CD8-positive, alpha-beta T cell (primary cell): ENCODE measurements at regions of chr6 and their contacts with region 1.

Region 1: DNA sequence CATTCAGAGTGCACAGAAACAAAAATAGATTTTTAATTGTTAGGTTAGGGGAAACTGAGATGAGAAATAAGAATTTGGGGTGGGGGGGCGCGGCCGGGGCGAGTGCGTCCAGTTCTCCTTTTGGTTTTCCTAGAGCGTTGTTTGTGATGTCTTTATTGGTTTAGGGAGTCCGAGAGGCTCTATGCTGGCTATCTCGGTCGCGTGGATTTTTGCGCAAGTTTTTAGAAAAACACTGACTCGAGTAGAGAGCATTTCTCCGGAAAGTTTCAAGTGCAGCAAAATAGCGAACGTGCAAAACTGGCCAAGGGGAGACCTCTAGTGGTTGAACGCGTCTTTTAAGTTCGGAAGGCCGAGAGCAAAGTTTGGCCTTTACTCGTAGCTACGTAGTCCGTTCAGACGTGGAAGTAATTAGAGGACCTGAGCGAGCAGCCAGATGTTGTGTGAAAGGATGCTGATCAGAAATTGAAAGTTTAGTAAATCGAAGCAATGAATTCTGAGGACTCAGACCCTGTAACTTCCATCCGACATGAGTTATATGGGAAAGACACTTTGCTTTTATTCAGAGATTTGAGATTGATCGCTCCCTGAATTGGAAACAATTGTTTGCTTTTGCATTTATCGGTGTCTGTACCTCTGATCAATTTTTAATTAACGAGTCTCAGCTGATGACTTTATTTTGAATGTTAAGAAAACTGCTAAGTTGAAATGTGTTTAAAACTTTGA is 2.7 kb downstream of the L3MBTL3 start:
- DNase-seq: peak; percentile 57 to 93 (median 78)
- ATAC-seq: peak; percentile 45
- H3K4me3 ChIP-seq: peak overlapping the region; percentile 61 to 85
- H3K4me3 Mint-ChIP-seq: peak overlapping the region; percentile 98
- H3K27ac ChIP-seq: peak overlapping the region; percentile 60 to 82
- H3K27ac Mint-ChIP-seq: peak overlapping the region; percentile 96
- H3K4me1 ChIP-seq: peaks cover 11% of the 10 kb centered on the region
- H3K4me1 Mint-ChIP-seq: peaks cover 43% of the 10 kb centered on the region
- H3K27me3 ChIP-seq: no peaks in the 10 kb centered on the region
- H3K27me3 Mint-ChIP-seq: no peaks in the 10 kb centered on the region
- CTCF ChIP-seq: peak; percentile 63

Region 2: DNA sequence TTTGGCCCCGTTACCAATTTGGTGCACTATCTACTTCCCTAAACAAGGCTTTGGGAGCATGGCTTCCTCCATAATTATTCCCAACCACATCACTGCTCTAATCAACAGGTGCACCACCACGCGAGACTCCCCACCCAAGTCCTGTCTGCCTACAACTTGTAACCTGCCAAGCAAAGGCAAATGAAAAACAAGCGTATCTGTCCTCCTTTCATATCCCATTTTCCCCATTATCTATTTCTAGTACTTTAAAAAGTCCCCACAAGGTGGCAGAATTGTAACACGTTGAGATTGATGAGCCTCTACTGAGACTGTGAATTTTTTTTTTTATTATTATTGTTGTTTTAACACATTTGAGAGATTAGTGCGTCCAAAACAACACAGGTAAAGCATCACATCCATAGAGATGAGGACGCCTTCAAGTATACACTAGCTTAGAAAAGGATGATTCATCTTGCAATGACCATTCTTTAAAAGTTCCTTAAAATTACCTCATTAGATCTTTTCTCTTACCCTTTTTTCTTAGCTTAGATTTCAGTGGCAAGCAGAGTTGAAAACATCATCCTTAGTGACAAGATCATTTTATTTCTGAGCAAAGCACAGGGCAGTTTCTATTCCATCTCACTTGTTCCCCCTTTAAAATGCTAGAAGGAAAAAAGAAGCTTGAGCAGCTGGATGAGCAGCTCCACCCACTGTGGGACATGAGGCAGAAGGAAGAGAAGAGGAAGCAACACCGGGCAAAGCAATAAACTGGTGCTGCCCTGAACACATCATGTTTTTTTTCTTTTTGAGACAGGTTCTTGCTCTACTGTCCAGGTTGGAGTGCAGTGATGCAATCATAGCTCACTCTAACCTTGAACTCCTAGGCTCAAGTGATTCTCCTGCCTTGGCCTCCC is 521.9 kb before region 1 on chr6:
- CTCF ChIA-PET with region 1: interaction called, 4 read pairs
- POLR2A ChIA-PET with region 1: interaction called, 3 read pairs
- intact Hi-C with region 1: loop called (anchors 2 kb)
- DNase-seq: peak in 3 of 9 experiments; percentile 22 to 76 (median 67)
- ATAC-seq: peak; percentile 68
- H3K4me3 ChIP-seq: no peak overlapping the region
- H3K4me3 Mint-ChIP-seq: peak overlapping the region; percentile 53
- H3K27ac ChIP-seq: no peak overlapping the region
- H3K27ac Mint-ChIP-seq: no peak overlapping the region
- H3K4me1 ChIP-seq: peaks cover 4% of the 10 kb centered on the region
- H3K4me1 Mint-ChIP-seq: peaks cover 9% of the 10 kb centered on the region
- H3K27me3 ChIP-seq: no peaks in the 10 kb centered on the region
- H3K27me3 Mint-ChIP-seq: no peaks in the 10 kb centered on the region
- CTCF ChIP-seq: peak; percentile 69

Region 3: DNA sequence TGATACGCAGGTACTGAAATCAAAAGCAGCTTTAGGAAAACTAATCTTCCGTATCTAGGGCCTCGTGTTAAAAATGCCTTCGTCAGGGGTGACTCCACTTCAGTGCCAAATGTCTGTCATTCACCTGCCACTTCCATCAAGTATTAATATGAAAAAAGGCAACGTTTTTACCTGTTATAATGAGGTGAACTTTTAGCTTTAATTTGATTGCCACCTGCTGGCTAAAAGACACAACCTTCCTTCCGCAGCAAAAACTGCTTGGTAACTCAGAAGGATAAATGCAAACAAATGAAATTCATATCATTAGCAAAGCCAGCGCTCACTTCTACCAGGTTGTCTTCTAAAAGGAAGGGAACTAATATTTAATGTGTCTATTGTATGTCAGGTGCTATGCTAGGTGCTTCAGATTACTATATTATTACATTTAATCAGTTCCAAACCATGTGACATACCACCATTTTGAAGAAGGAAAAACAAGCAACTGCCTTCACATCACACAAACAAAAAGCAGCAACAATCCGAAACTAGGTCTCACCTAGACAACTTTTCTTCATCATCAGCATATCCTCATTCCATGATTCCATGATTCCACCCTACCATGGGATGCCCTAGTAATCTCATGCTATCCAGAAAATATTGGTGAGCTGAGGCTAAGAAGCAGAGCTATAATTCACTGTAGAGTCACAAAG is 290.4 kb before region 1 on chr6:
- CTCF ChIA-PET with region 1: interaction called, 11 read pairs
- POLR2A ChIA-PET with region 1: interaction called, 5 read pairs
- intact Hi-C with region 1: loop called (anchors 1 to 5 kb)
- DNase-seq: peak in 4 of 9 experiments; percentile 16 to 70 (median 46)
- ATAC-seq: peak; percentile 67
- H3K4me3 ChIP-seq: no peak overlapping the region
- H3K4me3 Mint-ChIP-seq: no peak overlapping the region
- H3K27ac ChIP-seq: no peak overlapping the region
- H3K27ac Mint-ChIP-seq: no peak overlapping the region
- H3K4me1 ChIP-seq: no peaks in the 10 kb centered on the region
- H3K4me1 Mint-ChIP-seq: peaks cover 11% of the 10 kb centered on the region
- H3K27me3 ChIP-seq: no peaks in the 10 kb centered on the region
- H3K27me3 Mint-ChIP-seq: no peaks in the 10 kb centered on the region
- CTCF ChIP-seq: peak; percentile 67

Region 4: DNA sequence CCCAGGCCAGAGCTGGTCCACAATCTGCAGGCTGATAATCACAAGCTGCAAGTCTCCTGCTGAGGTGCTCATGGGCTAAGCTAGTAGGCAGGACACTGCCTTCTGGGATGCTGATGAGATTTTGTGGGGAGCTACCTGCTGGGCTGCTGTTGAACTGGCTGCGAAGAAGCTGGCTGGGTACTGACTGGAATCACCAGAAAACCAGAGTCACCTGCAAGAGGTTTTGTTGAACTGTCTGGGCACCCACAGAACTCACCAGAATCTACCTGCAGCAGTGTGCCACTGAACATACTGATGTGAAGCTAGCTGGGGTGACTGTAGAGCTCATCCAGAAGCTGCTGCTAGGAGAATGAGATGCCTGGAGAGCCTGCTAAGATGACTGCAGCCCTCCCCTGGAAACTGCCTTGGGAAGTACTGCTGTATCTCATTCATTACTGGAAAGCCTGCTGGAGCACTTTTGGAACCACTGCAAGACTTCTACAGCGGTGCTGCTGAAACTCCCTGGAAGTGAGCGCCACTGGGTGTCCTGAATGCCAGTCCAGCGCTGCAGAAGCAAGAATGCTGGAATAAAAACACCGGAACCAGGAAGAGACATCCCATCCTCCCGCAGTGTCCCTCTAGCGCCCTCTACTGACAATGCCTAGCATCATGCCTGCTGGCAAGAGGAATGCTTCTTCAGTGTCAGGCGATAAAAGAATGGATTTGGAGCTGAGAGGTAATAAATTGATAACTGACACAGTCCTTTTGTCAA is 246.2 kb before region 1 on chr6:
- CTCF ChIA-PET with region 1: interaction called, 5 read pairs
- POLR2A ChIA-PET with region 1: no interaction called
- intact Hi-C with region 1: loop called in 1 of 2 experiments (anchors 5 kb)
- DNase-seq: peak in 7 of 9 experiments; percentile 26 to 66 (median 47)
- ATAC-seq: no peak
- H3K4me3 ChIP-seq: no peak overlapping the region
- H3K4me3 Mint-ChIP-seq: no peak overlapping the region
- H3K27ac ChIP-seq: no peak overlapping the region
- H3K27ac Mint-ChIP-seq: no peak overlapping the region
- H3K4me1 ChIP-seq: no peaks in the 10 kb centered on the region
- H3K4me1 Mint-ChIP-seq: no peaks in the 10 kb centered on the region
- H3K27me3 ChIP-seq: no peaks in the 10 kb centered on the region
- H3K27me3 Mint-ChIP-seq: peaks cover 8% of the 10 kb centered on the region
- CTCF ChIP-seq: peak; percentile 64

Region 5: DNA sequence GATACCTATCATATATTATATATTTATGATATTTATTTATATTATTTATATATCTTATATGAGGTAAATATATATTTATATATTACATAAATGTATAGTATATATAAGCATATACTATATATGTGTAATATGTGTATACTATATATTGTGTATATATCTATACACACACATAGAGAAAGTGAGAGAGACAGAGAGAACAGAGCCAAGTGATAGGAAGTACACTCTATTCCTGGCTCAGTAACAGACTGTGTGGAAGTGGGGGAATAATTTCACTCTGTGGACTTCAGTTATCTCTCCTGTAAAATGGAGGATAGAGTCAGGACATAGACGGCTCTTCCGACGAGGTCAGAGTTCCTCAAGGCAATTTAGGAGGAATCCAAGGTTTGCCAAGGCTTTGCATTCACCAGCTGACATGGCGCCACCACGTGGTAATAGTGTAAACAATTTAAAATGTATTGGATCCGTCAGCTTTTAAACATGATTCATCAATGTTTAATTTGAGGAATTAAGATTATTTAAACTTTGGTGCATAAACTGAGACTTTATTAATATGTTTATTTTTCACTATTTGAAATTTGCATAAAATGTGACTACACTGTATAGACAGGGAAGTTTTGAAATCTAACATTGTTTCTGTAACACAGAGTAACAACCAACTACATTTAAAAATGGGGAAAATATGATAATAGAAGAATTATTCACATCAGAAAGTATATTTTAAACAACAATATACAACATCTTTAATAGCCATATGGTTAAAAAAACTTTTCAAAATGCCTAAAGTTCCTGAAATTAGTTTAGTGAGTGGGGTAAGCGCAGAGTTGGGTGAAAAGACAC is 84.5 kb before region 1 on chr6:
- CTCF ChIA-PET with region 1: interaction called, 7 read pairs
- POLR2A ChIA-PET with region 1: no interaction called
- intact Hi-C with region 1: loop called (anchors 1 to 5 kb)
- DNase-seq: peak in 6 of 9 experiments; percentile 26 to 69 (median 45)
- ATAC-seq: peak; percentile 40
- H3K4me3 ChIP-seq: no peak overlapping the region
- H3K4me3 Mint-ChIP-seq: no peak overlapping the region
- H3K27ac ChIP-seq: no peak overlapping the region
- H3K27ac Mint-ChIP-seq: no peak overlapping the region
- H3K4me1 ChIP-seq: no peaks in the 10 kb centered on the region
- H3K4me1 Mint-ChIP-seq: peaks cover 2% of the 10 kb centered on the region
- H3K27me3 ChIP-seq: no peaks in the 10 kb centered on the region
- H3K27me3 Mint-ChIP-seq: peaks cover 10% of the 10 kb centered on the region
- CTCF ChIP-seq: peak; percentile 76

Region 6: GRCh38 chr6:130105996-130106704 is 85.1 kb after region 1 on chr6:
- CTCF ChIA-PET with region 1: no interaction called
- POLR2A ChIA-PET with region 1: no interaction called
- intact Hi-C with region 1: no loop called
- DNase-seq: no peak
- ATAC-seq: no peak
- H3K4me3 ChIP-seq: no peak overlapping the region
- H3K4me3 Mint-ChIP-seq: no peak overlapping the region
- H3K27ac ChIP-seq: no peak overlapping the region
- H3K27ac Mint-ChIP-seq: no peak overlapping the region
- H3K4me1 ChIP-seq: no peaks in the 10 kb centered on the region
- H3K4me1 Mint-ChIP-seq: peaks cover 9% of the 10 kb centered on the region
- H3K27me3 ChIP-seq: no peaks in the 10 kb centered on the region
- H3K27me3 Mint-ChIP-seq: no peaks in the 10 kb centered on the region
- CTCF ChIP-seq: no peak

Region 7: DNA sequence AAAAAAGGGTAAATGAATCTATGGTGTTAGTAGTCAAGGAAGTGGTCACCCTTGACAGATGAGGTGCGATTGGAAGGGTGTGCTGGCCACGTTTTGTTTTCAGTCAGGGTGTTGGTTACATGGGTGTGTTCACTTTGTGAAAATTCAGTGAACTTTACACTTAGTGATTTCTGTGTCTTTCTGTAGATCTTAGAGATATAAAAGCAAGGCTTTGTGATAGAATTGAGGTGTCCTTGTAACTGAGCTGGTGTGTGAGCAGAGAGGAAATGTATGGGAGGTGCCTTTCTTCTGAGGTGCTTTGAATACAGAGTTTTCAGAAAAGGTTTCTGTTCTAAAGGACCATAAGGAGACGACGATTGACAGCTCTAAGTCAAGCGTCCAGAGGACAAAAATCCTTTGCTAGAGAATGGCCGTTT is 111.2 kb after region 1 on chr6:
- CTCF ChIA-PET with region 1: no interaction called
- POLR2A ChIA-PET with region 1: no interaction called
- intact Hi-C with region 1: loop called in 1 of 2 experiments (anchors 5 kb)
- DNase-seq: peak; percentile 30 to 89 (median 70)
- ATAC-seq: peak; percentile 85
- H3K4me3 ChIP-seq: peak overlapping the region; percentile 9 to 20
- H3K4me3 Mint-ChIP-seq: peak overlapping the region; percentile 68
- H3K27ac ChIP-seq: peak overlapping the region; percentile 71 to 73
- H3K27ac Mint-ChIP-seq: peak overlapping the region; percentile 93
- H3K4me1 ChIP-seq: peaks cover 61% of the 10 kb centered on the region
- H3K4me1 Mint-ChIP-seq: peaks cover 79% of the 10 kb centered on the region
- H3K27me3 ChIP-seq: no peaks in the 10 kb centered on the region
- H3K27me3 Mint-ChIP-seq: no peaks in the 10 kb centered on the region
- CTCF ChIP-seq: no peak

Region 8: DNA sequence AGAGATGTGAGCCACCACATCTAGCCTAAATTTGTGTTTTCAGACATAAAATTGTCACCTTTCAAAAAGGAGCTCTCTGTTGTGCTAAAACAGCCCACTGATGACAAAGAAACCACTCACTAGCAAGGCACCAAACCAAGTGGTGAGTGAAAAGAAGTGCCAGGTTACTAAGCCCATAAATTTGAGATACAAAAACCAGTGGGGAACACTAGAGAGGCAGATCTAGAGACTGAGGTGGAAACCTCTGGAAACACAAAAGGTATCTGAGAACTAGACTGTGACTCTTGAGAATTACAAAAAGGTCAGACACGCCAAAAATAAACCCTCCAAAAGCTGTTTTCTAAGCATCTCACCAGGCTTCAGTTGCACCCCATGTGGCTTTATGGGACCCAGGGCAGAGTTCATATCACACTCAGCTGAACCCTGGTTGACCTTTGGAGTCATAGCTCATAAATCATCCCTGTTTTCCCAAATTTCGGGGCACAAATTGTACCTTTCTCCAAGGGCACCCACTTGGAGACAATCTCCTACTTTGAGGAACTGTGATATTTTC is 177.5 kb after region 1 on chr6:
- CTCF ChIA-PET with region 1: no interaction called
- POLR2A ChIA-PET with region 1: no interaction called
- intact Hi-C with region 1: no loop called
- DNase-seq: no peak
- ATAC-seq: no peak
- H3K4me3 ChIP-seq: no peak overlapping the region
- H3K4me3 Mint-ChIP-seq: no peak overlapping the region
- H3K27ac ChIP-seq: peak overlapping the region in 1 of 2 experiments; percentile 45
- H3K27ac Mint-ChIP-seq: peak overlapping the region; percentile 52
- H3K4me1 ChIP-seq: peaks cover 10% of the 10 kb centered on the region
- H3K4me1 Mint-ChIP-seq: peaks cover 72% of the 10 kb centered on the region
- H3K27me3 ChIP-seq: no peaks in the 10 kb centered on the region
- H3K27me3 Mint-ChIP-seq: no peaks in the 10 kb centered on the region
- CTCF ChIP-seq: no peak